ENCODE measurements at regions of chrX and their contacts with region 1.

Region 1: GRCh38 chrX:106874075-106874474 is 29.1 kb downstream of the RIPPLY1 start:
- DNase-seq: no peak
- ATAC-seq: no peak
- H3K4me3 ChIP-seq: no peak overlapping the region
- H3K27ac ChIP-seq: no peak overlapping the region
- H3K4me1 ChIP-seq: no peaks in the 10 kb centered on the region
- H3K27me3 ChIP-seq: no peaks in the 10 kb centered on the region
- CTCF ChIP-seq: peak; percentile 65; the same call in 1 of the 2 replicates

Region 2: GRCh38 chrX:106973433-106974149 is 99.5 kb after region 1 on chrX:
- CTCF ChIA-PET with region 1: interaction called, 11 read pairs
- POLR2A ChIA-PET with region 1: no interaction called
- in situ Hi-C with region 1: no loop called
- intact Hi-C with region 1: no loop called
- DNase-seq: no peak
- ATAC-seq: no peak
- H3K4me3 ChIP-seq: no peak overlapping the region
- H3K27ac ChIP-seq: no peak overlapping the region
- H3K4me1 ChIP-seq: no peaks in the 10 kb centered on the region
- H3K27me3 ChIP-seq: no peaks in the 10 kb centered on the region
- CTCF ChIP-seq: no peak